ENCODE measurements at regions of chr15 and their contacts with region 1.

Region 1: DNA sequence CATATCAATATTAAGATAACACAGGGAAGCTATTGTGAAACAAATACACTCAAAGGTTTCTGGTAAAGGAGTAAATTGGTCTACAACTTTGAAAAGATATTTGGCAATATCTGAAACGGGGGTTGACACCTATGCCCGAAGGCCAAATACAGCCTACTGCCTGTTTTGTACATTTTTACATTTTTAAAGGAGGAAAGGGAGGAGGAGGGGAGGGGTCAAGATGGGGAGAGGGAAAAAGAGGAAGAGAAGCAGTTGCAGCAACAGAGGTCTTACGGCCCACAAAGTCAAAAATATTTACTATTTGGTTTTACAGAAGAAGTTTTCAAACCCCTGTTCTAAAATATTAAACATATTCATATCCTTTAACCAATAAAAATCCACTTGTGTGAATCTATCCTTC is 94.2 kb downstream of the FMN1 start:
- DNase-seq: no peak
- H3K4me3 ChIP-seq: no peak overlapping the region
- H3K27ac ChIP-seq: no peak overlapping the region
- H3K4me1 ChIP-seq: no peaks in the 10 kb centered on the region
- H3K27me3 ChIP-seq: no peaks in the 10 kb centered on the region
- CTCF ChIP-seq: no peak
- POLR2A ChIP-seq: no peak

Region 2: DNA sequence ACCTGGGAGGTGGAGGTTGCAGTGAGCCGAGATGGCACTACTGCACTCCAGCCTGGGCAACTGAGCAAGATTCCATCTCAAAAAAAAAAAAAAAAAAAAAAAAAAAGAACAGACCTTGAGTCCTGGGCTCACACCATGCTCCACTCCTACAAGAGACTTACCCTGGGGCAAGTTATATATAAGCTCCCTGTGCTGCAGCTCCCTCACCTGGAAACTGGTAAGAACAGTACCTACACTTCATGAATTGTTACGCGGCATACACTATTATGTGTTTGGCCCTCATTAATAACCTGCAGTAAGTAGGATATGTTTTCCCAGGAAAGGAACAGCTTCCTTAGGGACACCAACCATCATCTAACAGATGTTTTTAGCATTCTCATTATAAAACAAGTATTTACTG is 25.4 kb before region 1 on chr15:
- intact Hi-C with region 1: loop called (anchors 2 kb)
- DNase-seq: no peak
- H3K4me3 ChIP-seq: no peak overlapping the region
- H3K27ac ChIP-seq: no peak overlapping the region
- H3K4me1 ChIP-seq: no peaks in the 10 kb centered on the region
- H3K27me3 ChIP-seq: no peaks in the 10 kb centered on the region
- CTCF ChIP-seq: no peak
- POLR2A ChIP-seq: no peak

Measured in breast epithelium (tissue), 4 donors.